ENCODE measurements at regions of chr18 and their contacts with region 1.

Region 1: GRCh38 chr18:3281456-3282400 is 19.8 kb downstream of the MYL12B start:
- DNase-seq: no peak
- H3K4me3 ChIP-seq: no peak overlapping the region
- H3K27ac ChIP-seq: peak overlapping the region in 3 of 4 donors; percentile 19 to 49 (median 23)
- H3K4me1 ChIP-seq: peaks cover 0 to 8% (median 6%) of the 10 kb centered on the region in 4 donors
- H3K27me3 ChIP-seq: no peaks in the 10 kb centered on the region
- CTCF ChIP-seq: peak; percentile 68 to 74 (median 72)
- EP300 ChIP-seq: no peak
- POLR2A ChIP-seq: no peak

Region 2: DNA sequence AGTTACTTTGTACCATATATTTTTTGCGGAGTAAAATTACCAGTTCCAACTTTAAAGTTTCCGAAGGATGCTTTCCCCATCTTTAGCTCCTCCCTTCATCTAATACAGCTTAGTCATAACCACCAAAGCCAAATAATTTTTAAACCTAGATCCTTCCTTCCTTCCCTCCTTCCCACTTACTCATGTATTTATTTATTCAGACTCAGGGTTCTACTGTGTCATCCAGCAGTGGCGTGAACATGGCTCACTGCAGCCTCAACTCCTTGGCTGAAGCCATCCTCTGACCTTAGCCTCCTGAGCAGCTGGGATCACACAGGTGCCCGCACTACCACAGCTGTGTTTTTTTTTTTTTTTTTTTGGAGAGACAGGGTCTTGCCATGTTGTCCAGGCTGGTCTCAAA is 273.2 kb before region 1 on chr18:
- intact Hi-C with region 1: no loop called
- DNase-seq: no peak
- H3K4me3 ChIP-seq: no peak overlapping the region
- H3K27ac ChIP-seq: no peak overlapping the region
- H3K4me1 ChIP-seq: peaks cover 15 to 44% (median 41%) of the 10 kb centered on the region in 4 donors
- H3K27me3 ChIP-seq: no peaks in the 10 kb centered on the region
- CTCF ChIP-seq: no peak
- EP300 ChIP-seq: no peak
- POLR2A ChIP-seq: no peak

Region 3: DNA sequence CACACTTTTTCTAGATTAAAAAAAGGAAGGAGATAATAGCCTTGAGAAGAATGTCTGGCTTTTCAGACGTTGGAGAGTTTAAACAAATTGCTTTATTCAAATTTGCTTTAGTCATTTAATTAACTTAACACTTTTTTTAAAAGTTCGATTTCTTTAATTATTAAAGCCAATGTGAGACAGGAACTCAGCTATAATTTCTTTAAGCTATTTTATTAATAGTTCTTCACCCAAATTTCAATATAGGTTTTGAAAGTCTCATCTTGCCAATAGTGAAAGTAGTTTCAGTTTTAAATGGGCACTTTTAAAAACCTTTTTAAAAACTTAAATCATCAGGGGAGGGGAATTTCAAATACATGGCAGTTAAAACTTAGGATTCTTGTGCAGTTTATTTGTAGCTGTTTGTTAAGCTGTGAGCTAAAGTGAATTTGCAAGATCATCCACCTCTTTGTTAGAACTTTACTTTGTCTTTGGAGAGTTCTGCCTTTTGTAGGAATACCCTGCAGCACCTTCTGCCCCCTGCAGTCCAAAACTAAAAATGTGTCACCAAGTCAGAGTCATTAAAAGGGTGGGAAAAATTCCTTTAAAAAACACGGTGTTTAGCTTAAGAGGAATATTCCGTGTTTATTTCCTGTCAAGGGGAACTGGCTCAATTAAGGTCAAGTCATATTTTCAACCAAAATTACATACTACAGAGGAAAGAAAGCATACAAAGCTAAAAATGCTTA is 172.8 kb after region 1 on chr18:
- intact Hi-C with region 1: loop called (anchors 5 kb)
- DNase-seq: peak; percentile 82
- H3K4me3 ChIP-seq: peak overlapping the region; percentile 69 to 96 (median 90)
- H3K27ac ChIP-seq: peak overlapping the region; percentile 98 to 100 (median 98)
- H3K4me1 ChIP-seq: peaks cover 24 to 63% (median 53%) of the 10 kb centered on the region in 4 donors
- H3K27me3 ChIP-seq: no peaks in the 10 kb centered on the region
- CTCF ChIP-seq: peak; percentile 71 to 79 (median 76)
- EP300 ChIP-seq: no peak
- POLR2A ChIP-seq: no peak

Region 4: GRCh38 chr18:3593904-3594661 is 312.4 kb after region 1 on chr18:
- intact Hi-C with region 1: loop called (anchors 5 kb)
- DNase-seq: peak; percentile 98
- H3K4me3 ChIP-seq: peak overlapping the region; percentile 53 to 62 (median 56)
- H3K27ac ChIP-seq: peak overlapping the region; percentile 89 to 97 (median 96)
- H3K4me1 ChIP-seq: peaks cover 46 to 53% (median 52%) of the 10 kb centered on the region in 4 donors
- H3K27me3 ChIP-seq: no peaks in the 10 kb centered on the region
- CTCF ChIP-seq: peak; percentile 83 to 90 (median 89)
- EP300 ChIP-seq: peak; percentile 58
- POLR2A ChIP-seq: no peak

Measured in esophagus muscularis mucosa (tissue), 4 donors.